HepG2 (cell line): ENCODE measurements at regions of chr6 and their contacts with region 1.

Region 1: GRCh38 chr6:131914967-131915751 is 36.0 kb downstream of the CCN2 start:
- DNase-seq: peak; percentile 69
- ATAC-seq: peak; percentile 78
- H3K4me3 ChIP-seq: peak overlapping the region in 1 of 3 experiments; percentile 17; a peak in 1 of 6 replicates
- H3K27ac ChIP-seq: no peak overlapping the region
- H3K4me1 ChIP-seq: peaks cover 23% of the 10 kb centered on the region; the same call in 1 of the 2 replicates
- H3K27me3 ChIP-seq: no peaks in the 10 kb centered on the region
- CTCF ChIP-seq: peak; percentile 90
- EP300 ChIP-seq: no peak
- POLR2A ChIP-seq: no peak
- RAD21 ChIP-seq: peak; percentile 77

Region 2: GRCh38 chr6:132218059-132218696 is 303.0 kb after region 1 on chr6:
- CTCF ChIA-PET with region 1: interaction called, 15 read pairs
- POLR2A ChIA-PET with region 1: no interaction called
- in situ Hi-C with region 1: no loop called
- intact Hi-C with region 1: no loop called
- DNase-seq: peak; percentile 25
- ATAC-seq: no peak
- H3K4me3 ChIP-seq: no peak overlapping the region
- H3K27ac ChIP-seq: no peak overlapping the region
- H3K4me1 ChIP-seq: no peaks in the 10 kb centered on the region
- H3K27me3 ChIP-seq: peaks cover 0 to 6% of the 10 kb centered on the region in 2 experiments; a peak in 2 of 5 replicates
- CTCF ChIP-seq: peak; percentile 44
- EP300 ChIP-seq: no peak
- POLR2A ChIP-seq: no peak
- RAD21 ChIP-seq: peak; percentile 55